Mucosa of descending colon (tissue), 3 donors: ENCODE measurements at regions of chr15 and their contacts with region 1.

Region 1: GRCh38 chr15:91271565-91272153 is 171.6 kb downstream of the SV2B start:
- DNase-seq: peak in 2 of 3 donors; percentile 34 to 69
- ATAC-seq: peak; percentile 75
- H3K4me3 ChIP-seq: no peak overlapping the region
- H3K4me1 ChIP-seq: no peaks in the 10 kb centered on the region
- CTCF ChIP-seq: peak; percentile 24

Region 2: DNA sequence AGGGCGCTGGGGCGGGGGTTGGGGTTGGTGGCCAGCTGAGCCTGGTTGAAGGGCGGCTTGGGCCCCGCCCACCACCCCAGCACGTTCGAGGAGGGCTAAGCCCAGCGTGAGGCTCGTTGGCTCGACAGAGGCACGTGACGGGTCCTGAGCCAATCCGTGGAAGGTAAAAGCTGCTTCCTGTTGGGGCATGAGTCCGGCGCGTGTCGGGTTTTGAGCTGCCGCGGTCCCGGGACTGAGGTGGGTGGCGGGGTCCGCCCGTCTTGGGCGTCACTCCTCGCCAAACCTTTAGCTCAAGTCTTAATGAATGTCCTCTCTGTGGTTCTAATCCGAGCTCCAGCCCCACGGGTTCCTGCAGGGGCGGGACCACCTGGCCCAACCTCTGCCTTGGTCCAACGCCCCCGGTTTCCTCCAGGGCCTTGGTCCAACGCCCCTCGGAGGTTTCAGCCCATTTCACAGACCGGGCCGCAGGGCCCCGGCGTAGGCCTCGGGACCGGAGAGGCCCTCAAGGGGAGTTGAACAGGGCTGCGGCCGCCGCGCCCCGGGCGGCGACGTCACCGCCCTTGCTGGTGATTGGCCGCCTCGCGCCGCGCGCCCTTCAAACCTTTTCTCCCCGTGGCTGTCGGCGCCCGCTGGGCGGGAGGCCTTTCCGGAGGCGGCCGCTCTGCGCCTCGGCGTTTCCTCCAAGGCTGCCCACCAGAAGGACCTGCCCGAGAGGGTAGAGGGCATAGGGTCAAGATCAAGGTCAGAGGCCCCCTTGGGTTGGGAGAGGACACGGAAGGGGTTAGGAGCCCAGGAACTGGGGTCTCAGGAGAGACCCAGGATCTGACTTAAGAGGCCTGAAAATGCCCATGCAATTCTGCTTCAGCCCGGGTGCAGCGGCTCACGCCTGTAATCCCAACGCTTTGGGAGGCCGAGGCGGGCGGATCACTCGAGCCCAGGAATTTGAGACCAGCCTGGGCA is 316.7 kb before region 1 on chr15 and contains the start of gene RCCD1:
- intact Hi-C with region 1: loop called in 1 of 2 experiments (anchors 10 kb)
- DNase-seq: peak; percentile 95 to 97 (median 96)
- ATAC-seq: peak; percentile 90
- H3K4me3 ChIP-seq: peak within 1 kb of the TSS; percentile 65
- H3K4me1 ChIP-seq: peaks cover 16% of the 10 kb centered on the region
- CTCF ChIP-seq: no peak
- total RNA-seq, gene RCCD1: 18.5 to 21.5 (median 20.7) TPM

Region 3: GRCh38 chr15:91055548-91056331 is 215.9 kb before region 1 on chr15:
- intact Hi-C with region 1: loop called (anchors 5 kb)
- DNase-seq: peak in 2 of 3 donors; percentile 42 to 74
- ATAC-seq: peak; percentile 89
- H3K4me3 ChIP-seq: no peak overlapping the region
- H3K4me1 ChIP-seq: no peaks in the 10 kb centered on the region
- CTCF ChIP-seq: peak; percentile 37